Calu3 (cell line): ENCODE measurements at regions of chr2 and their contacts with region 1.

Region 1: DNA sequence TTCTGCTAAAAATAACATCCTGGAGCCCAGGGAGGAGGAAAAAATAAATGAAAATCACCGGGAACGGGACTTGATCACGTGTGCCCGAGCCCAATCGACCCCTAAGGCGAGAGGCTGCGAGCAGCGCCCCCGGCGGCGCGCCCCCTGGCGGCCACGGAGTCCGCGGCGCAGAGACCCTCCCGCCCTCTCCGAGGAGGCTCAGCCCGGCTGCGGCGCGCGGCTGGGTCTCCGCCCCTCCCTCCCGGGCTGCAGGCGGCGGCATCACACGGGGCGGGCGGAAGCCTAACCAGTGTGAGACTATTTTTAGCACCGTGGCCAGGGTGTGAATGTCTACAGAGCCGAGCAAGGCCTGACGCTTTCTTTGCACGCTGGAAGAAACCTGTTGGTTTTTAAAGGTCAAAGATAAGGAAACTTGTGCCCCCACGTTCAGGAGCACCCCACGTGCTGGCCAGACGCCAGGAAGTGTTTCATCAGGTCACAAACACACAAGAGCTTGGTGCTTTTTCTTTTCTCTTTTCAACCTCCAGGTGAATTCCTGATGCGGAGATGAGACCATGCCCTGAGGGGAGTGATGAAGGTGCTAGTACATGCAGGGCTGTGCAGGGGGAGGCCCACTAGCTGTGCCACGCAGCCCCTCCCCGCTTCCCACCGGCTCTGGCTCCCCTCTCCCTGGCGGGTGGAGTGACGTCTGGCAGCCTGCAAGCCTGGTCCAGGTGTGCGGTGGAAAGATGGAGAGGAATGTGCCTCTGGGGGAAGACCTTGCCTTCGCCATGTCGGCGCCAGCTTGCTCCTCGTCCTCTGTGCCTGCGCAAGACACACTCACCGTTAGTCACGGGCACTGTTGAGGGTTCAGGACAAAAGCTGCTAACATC is 35.3 kb upstream of the DNMT3A start:
- DNase-seq: peak; percentile 90
- H3K4me3 Mint-ChIP-seq: peak overlapping the region; percentile 24
- H3K27ac Mint-ChIP-seq: no peak overlapping the region
- H3K4me1 Mint-ChIP-seq: peaks cover 14% of the 10 kb centered on the region
- H3K27me3 Mint-ChIP-seq: no peaks in the 10 kb centered on the region
- CTCF ChIP-seq: peak; percentile 97

Region 2: GRCh38 chr2:24886691-24887304 is 490.2 kb before region 1 on chr2:
- CTCF ChIA-PET with region 1: no interaction called
- intact Hi-C with region 1: no loop called
- DNase-seq: no peak
- H3K4me3 Mint-ChIP-seq: no peak overlapping the region
- H3K27ac Mint-ChIP-seq: no peak overlapping the region
- H3K4me1 Mint-ChIP-seq: no peaks in the 10 kb centered on the region
- H3K27me3 Mint-ChIP-seq: no peaks in the 10 kb centered on the region
- CTCF ChIP-seq: no peak

Region 3: DNA sequence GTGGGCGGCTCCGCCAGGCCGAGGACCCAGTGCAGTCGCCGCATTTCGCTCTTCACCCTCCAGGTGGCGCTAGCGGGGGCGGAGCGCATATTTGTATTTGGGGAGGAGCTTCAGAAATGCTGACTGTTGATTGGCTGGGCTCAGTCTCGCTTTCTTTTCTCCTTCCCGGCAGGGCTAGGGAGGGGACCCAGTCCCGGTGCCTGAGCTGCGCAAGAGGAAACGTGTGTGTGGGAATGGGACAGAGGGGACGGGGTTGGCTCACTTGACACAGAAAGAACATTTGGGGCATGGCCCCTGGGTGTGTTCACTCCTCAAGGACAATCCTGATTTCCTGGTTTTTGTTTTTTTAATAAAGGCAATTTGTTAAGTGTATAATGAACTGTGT is 14.9 kb before region 1 on chr2:
- CTCF ChIA-PET with region 1: interaction called, 12 read pairs
- intact Hi-C with region 1: no loop called
- DNase-seq: peak; percentile 95
- H3K4me3 Mint-ChIP-seq: peak overlapping the region; percentile 59
- H3K27ac Mint-ChIP-seq: peak overlapping the region; percentile 7
- H3K4me1 Mint-ChIP-seq: peaks cover 25% of the 10 kb centered on the region
- H3K27me3 Mint-ChIP-seq: no peaks in the 10 kb centered on the region
- CTCF ChIP-seq: peak; percentile 91

Region 4: GRCh38 chr2:25521665-25522387 is 144.8 kb after region 1 on chr2:
- CTCF ChIA-PET with region 1: no interaction called
- intact Hi-C with region 1: loop called (anchors 5 kb)
- DNase-seq: peak; percentile 26
- H3K4me3 Mint-ChIP-seq: peak overlapping the region; percentile 61
- H3K27ac Mint-ChIP-seq: peak overlapping the region; percentile 63
- H3K4me1 Mint-ChIP-seq: peaks cover 7% of the 10 kb centered on the region
- H3K27me3 Mint-ChIP-seq: no peaks in the 10 kb centered on the region
- CTCF ChIP-seq: peak; percentile 35

Region 5: DNA sequence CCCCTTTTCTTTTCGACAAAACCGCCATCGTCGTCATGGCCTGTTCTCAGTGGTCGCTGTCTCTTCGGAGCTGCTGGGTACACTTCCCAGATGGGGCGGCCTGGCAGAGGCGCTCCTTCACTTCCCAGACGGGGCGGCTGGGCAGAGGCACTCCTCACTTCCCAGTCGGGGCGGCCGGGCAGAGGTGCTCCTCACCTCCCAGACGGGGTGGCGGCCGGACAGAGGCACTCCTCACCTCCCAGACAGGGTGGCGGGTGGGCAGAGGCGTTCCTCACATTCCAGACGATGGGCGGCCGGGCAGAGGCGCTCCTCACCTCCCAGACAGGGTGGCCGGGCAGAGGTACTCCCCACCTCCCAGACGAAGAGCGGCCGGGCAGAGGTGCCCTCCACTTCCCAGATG is 157.5 kb after region 1 on chr2:
- CTCF ChIA-PET with region 1: interaction called, 12 read pairs
- intact Hi-C with region 1: no loop called
- DNase-seq: no peak
- H3K4me3 Mint-ChIP-seq: no peak overlapping the region
- H3K27ac Mint-ChIP-seq: no peak overlapping the region
- H3K4me1 Mint-ChIP-seq: no peaks in the 10 kb centered on the region
- H3K27me3 Mint-ChIP-seq: no peaks in the 10 kb centered on the region
- CTCF ChIP-seq: no peak